Posterior cingulate gyrus (tissue), 11 donors: ENCODE measurements at regions of chr4 and their contacts with region 1.

Region 1: DNA sequence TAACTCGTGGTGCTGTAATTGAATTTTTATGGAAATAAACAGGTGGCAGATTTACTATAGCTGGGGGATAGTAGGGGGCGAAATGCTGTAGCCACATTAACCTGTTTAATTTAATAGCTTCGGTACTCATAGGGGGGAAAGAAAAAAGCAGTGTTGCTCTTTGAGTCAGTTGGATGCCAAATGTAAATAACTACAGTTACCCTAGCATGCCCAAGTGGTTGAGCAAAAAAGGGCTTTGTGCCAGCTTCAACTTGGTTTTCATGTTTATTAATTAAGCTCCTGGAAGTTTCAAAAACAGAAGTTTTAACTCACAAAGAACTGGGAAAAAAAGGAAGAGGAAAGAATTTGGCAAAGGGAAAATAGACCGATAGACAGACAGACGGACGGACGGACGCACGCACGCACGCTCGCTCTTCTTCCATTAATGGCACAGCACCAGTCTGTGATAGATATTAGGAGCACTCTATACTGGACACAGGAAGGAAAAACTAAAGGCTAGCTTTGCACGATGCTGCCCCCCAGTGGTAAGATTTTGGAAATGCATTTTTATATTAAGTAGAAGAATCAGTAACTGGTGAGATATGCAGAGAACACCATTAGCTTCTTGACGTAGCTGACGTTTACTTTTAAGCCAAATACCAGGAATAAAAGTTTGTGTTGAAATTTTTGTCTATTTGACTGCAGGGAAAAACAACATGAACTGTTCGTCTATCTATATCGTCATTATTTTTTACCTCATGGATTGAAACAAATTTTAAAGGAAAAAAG is 151.8 kb downstream of the SLC7A11 start:
- DNase-seq: peak in 5 of 10 donors; percentile 22 to 77 (median 50)

Region 2: DNA sequence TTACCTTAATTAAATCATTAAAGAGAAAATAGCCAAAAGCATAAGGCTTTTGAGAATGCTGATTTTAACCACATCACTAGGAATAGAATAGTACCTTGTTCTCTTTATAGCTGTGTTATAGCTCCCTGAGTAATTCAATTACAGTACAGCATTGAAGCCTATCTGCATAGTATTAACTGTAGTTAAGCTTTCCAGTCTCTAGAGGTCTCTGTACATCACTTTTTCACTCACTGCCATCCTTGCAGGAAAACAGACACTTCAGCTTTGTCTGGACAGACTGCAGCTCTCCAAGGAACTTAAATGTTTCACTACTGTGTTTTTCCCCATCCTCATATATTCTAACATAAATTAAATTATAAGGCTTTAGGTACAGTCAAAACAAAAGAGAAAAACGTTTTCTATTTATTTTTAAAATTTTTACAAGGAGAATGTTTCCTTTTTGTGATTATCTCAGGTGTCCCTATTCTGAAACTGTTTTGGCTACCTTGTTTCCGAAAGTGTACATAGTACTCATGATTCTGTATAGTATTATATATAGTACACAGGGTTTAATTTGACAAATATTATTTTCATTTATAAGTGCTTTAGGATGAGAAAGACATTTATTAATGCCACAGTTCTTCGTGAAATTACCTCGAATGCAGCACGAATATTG is 965.9 kb before region 1 on chr4:
- intact Hi-C with region 1: loop called (anchors 5 kb)
- DNase-seq: no peak

Region 3: DNA sequence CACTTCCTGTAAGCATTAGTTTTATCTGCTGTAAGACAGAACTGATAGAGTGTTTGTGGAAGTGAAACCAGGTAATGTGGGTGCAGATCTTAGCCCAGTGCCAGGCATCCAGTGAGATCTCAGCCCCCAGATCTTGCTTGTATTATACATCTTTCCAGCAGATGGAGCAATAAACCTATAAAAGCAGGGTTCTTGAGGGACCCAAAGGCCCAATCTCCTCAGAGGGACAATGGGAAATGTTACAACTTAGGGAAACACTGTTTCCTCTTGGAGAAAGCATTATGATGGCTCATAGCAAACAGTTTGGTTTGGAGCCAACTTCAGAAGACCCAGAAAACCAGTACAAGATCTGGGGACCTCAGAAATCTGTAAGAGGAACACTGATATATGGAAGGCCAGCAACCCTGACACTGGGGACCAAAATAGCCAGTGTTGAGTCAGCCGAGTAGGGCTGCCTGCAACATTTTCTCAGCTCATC is 54.5 kb before region 1 on chr4:
- intact Hi-C with region 1: loop called (anchors 5 kb)
- DNase-seq: no peak

Region 4: GRCh38 chr4:138174981-138175794 is 84.9 kb after region 1 on chr4:
- intact Hi-C with region 1: loop called (anchors 10 kb)
- DNase-seq: no peak

Region 5: DNA sequence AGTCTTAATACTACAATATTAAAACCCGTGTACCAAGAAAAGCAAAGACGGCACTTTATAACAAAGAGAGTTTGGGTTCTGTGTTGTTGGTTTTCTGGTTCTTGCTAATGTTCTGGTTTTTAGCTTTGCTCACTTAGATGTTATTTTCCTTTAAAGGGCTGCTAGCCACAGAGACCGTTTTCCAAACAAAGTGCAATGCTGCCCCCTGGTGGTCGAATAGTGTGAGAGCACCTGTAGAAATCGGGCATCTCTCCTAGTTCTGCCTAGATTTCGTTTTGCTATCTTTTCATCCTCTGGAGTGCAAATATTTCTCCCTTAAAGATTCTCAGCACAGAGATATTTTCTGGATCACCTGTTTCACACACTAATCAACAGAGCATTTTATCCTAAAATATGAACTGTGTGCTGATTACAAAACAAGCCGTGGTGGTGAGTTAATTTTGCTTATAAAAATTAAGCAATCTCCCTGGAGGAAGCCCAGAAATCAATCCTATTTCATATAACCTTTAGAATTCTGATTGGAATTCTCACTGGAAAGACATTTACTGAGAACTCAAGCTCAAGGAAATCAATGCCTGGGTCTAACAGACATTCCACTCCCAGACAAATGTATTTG is 590.8 kb after region 1 on chr4:
- intact Hi-C with region 1: loop called (anchors 5 kb)
- DNase-seq: peak; percentile 79 to 97 (median 89)

Region 6: DNA sequence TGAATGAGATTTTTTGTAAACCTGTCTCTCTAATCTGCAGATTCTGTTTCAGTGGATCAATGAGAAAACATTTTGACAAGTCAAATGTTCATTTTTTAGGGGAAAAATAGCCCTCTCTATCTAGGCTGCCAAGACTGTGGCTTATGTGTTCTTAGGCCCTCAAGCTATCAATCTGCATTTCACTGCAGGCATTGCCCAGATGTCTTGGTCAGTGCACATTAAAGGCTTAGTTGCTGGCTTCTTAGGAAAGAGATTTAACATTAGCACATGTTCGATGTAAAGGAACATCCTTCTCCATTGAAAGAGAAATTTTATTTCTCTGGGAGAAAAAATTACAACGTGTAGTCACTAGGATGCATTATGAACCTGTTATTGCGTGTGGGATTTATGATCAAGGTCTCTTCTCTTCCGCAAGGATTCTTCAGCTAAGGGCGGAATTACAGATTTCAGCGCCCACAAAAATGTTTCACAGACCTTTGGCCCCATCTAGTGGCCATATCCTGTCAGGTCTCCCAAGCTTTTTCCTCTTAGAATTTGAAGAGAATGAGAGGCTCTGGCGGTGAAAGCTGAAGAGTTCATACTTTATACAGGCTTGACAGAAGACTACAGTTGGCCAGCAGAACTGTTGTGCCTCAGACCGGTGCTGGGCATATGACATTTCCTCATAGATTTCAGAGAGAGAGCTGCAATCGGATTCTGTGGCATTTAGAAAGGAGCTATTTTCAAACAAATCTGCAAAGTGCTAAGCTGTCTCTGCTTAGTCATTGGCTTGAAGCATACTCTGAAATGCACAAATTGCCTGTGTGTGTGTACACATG is 780.6 kb after region 1 on chr4:
- intact Hi-C with region 1: loop called (anchors 5 kb)
- DNase-seq: peak in 9 of 10 donors; percentile 31 to 89 (median 73)